ENCODE measurements at regions of chrX and their contacts with region 1.

Region 1: DNA sequence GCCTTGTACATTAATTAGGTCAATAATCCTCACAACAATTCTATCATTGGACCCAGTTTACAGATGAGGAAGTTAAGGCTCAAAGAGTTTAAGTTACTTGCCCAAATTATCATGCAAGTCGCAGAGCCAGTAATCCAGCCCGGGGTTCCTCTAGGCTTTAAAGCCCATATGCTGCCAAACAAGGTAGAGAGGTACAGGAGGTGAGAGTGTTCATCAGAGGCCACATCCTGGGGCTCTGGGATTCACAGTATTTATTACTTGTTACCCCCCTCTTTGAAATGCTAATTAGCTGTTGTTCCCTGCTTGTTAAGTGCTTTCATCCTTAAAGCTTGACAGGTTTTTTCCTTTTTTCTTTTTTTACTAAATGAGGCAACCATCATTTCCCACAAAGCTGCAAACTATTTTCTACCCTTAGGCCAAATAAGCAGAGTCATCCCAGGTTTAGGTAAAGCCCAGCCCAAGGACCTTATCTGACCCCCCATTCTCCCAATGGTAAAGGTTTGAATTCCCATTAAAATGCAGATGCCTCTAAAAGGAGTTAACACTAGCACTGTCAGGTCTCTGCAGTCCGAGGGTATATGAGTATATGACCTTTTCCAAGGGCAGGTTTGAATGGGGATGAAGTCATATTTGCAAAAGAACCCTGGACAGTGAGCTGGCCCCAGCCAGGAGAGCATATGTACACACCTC is 150.3 kb downstream of the SOX3 start:
- DNase-seq: no peak
- H3K4me3 ChIP-seq: no peak overlapping the region
- H3K27ac ChIP-seq: no peak overlapping the region
- H3K4me1 ChIP-seq: no peaks in the 10 kb centered on the region
- H3K27me3 ChIP-seq: no peaks in the 10 kb centered on the region
- CTCF ChIP-seq: no peak
- EP300 ChIP-seq: no peak
- POLR2A ChIP-seq: no peak

Region 2: GRCh38 chrX:140480765-140481164 is 126.2 kb after region 1 on chrX:
- intact Hi-C with region 1: no loop called
- DNase-seq: no peak
- H3K4me3 ChIP-seq: no peak overlapping the region
- H3K27ac ChIP-seq: no peak overlapping the region
- H3K4me1 ChIP-seq: no peaks in the 10 kb centered on the region
- H3K27me3 ChIP-seq: no peaks in the 10 kb centered on the region
- CTCF ChIP-seq: no peak
- EP300 ChIP-seq: no peak
- POLR2A ChIP-seq: no peak

Region 3: GRCh38 chrX:140602140-140602539 is 247.6 kb after region 1 on chrX:
- intact Hi-C with region 1: loop called in 1 of 4 experiments (anchors 5 kb)
- DNase-seq: no peak
- H3K4me3 ChIP-seq: no peak overlapping the region
- H3K27ac ChIP-seq: no peak overlapping the region
- H3K4me1 ChIP-seq: no peaks in the 10 kb centered on the region
- H3K27me3 ChIP-seq: no peaks in the 10 kb centered on the region
- CTCF ChIP-seq: no peak
- EP300 ChIP-seq: no peak
- POLR2A ChIP-seq: no peak

Measured in ovary (tissue), 10 donors.